ENCODE measurements at regions of chr6 and their contacts with region 1.

Region 1: DNA sequence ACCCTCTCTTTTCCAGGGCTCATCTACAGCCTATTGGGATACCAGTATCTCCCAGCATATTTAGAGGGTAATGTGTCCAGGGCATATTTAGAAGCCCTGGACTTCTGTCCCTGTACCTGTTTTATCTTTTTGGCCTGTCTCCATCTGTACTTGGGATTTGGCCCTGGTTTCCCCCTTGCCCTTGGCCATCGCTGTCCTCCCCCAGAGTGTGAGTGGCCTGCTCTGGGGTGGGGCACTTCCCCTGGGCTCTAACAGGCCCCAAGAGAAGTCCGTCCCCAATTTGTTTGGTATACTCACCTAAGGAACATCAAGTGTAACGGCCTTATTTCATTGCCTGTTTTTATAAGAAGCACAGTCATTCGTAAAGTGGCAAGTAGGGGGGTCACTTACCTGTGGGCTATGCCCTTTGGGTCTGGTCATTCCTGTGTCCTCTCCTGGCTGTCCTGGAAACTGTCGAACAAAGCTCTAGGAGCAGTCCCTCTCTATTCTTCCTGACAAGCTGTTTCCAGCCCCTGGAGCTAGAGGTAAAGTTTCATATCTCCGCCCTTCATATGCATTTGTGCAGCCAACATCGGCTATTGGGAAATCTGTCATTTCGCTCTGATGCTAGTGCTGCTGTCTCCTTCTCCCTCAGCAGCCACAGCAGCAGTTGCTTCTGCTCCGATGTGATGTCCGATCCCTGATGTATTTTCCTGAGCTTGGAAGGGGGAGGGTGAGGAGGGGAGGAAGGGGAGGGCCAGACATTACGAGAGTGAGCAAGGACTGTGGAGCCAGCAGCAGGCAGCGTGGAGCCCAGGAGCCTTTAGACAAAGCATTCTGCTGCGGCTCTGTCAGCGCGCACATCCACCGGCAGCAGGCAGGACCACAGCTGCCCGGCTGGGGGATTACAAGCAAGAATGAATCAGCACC is 83.4 kb downstream of the TCP11 start:
- DNase-seq: no peak
- ATAC-seq: peak; percentile 49 to 51

Region 2: GRCh38 chr6:35016502-35017321 is 41.0 kb before region 1 on chr6:
- intact Hi-C with region 1: loop called in 1 of 2 experiments (anchors 5 kb)
- DNase-seq: peak; percentile 57
- ATAC-seq: peak; percentile 61 to 69

Measured in left cardiac atrium (tissue), 4 donors.